ENCODE measurements at regions of chr5 and their contacts with region 1.

Region 1: DNA sequence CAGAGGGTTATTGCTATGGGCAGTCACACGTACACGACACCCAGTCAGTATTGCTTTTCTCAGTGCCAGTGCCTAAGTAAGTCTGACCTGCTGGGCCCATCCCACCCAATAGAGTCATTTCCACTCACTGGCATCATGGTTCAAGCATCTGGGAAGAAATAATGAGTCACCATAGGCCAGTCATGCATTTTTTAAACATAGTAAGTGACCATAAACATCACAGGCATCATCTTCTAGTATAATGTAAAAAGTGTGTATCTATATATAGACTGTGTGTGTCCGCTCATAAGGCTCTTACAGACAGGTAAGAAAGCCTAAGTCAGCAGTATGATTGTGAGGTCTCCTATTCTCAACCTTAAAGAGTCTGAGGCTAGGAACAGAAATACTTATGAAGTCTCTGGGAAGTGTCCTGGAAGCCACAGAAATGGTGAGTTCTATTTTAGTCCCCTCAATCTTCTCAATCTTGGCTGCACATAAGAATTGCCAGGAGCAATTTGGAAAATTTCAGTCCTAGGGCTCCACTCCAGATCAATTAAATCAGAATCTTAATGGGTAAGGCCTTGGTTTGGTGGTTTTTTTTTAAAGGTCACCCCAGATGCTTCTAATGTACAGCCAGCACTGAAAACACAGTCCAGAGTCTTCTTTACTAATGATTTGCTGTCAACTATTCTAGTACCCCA is 65.2 kb downstream of the ZNF366 start:
- DNase-seq: peak; percentile 76
- H3K4me3 ChIP-seq: no peak overlapping the region
- H3K27ac ChIP-seq: peak overlapping the region; percentile 34
- H3K4me1 ChIP-seq: peaks cover 22% of the 10 kb centered on the region
- H3K27me3 ChIP-seq: no peaks in the 10 kb centered on the region
- CTCF ChIP-seq: no peak

Region 2: DNA sequence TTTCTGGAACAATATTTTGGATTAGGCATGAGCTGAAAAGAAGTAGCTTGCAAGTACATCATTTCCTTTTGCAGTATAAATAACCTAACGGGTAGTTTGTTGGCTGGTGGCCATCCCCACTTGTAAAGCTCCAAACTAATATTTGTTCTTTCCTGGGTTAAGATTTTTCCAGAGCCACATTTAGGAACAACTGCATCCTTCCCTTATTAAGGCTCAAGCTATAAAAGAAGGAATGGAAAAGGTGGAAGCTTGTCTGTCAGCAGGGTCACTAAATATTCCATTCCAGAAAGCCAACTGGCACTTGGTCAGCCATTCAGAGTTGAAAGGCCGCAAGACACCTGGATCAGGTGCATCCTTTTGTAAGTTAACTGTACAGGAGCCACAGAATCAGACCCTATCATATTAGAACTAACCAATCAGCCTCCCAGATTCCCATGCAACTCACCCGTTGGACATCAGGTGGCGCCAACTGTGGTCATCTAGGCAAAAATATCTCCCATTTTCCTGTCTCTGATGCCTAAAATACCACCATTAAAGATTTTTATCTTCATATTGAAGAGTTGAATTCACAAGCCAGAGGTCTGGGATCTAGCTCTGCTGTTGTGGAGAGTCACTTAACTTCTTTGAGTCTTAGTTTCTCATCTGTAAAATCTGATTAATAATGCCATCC is 38.9 kb before region 1 on chr5:
- dilution Hi-C with region 1: loop called (anchors 5 kb)
- DNase-seq: no peak
- H3K4me3 ChIP-seq: no peak overlapping the region
- H3K27ac ChIP-seq: peak overlapping the region; percentile 74
- H3K4me1 ChIP-seq: peaks cover 18% of the 10 kb centered on the region
- H3K27me3 ChIP-seq: no peaks in the 10 kb centered on the region
- CTCF ChIP-seq: peak; percentile 27 to 59 (median 53)

Measured in keratinocyte (primary cell).